Tibial artery (tissue), 4 donors: ENCODE measurements at regions of chr14 and their contacts with region 1.

Region 1: DNA sequence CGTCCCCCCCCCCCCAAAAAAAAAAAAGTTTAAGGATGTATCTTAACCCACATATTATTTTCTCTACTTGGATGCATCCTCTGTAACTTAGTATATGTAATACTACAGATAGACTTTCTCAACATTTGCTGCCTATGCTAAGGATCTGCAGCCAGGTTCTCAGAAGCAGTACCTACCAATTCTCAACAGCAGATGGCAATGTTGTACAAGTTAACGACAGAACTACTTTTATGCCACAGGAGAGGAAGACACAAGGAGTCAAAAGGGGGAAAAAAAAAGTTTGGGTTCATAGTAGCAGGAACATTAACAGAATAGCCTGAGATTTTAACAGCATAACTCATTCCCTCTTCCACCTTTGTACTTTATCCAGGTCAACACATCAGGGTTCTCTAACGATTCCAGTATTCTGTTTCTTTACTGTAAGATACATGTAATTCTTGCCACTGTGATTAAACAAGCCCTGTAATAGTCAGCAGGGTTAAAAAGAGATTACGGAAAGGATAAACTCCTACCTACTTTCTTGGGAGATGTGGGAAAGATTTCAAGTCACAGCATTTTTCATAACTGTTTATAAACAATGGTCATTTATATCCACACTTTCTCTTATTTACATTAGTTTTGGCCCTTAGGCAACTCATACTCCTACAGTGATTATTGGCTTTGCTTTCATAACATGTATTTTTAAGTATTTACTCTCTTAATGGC is 5.7 kb upstream of the NEK9 start:
- DNase-seq: peak in 1 of 2 donors; percentile 38
- H3K4me3 ChIP-seq: no peak overlapping the region
- H3K27ac ChIP-seq: no peak overlapping the region
- H3K4me1 ChIP-seq: peaks cover 0 to 13% (median 6%) of the 10 kb centered on the region in 4 donors
- H3K27me3 ChIP-seq: no peaks in the 10 kb centered on the region
- CTCF ChIP-seq: peak; percentile 65 to 94

Region 2: GRCh38 chr14:75198291-75198933 is 65.9 kb after region 1 on chr14:
- intact Hi-C with region 1: no loop called
- DNase-seq: peak in 1 of 2 donors; percentile 77
- H3K4me3 ChIP-seq: no peak overlapping the region
- H3K27ac ChIP-seq: peak overlapping the region; percentile 21 to 44
- H3K4me1 ChIP-seq: peaks cover 0 to 16% (median 12%) of the 10 kb centered on the region in 4 donors
- H3K27me3 ChIP-seq: no peaks in the 10 kb centered on the region
- CTCF ChIP-seq: no peak

Region 3: GRCh38 chr14:75301666-75302325 is 169.3 kb after region 1 on chr14:
- intact Hi-C with region 1: loop called (anchors 2 kb)
- DNase-seq: peak; percentile 60 to 77
- H3K4me3 ChIP-seq: no peak overlapping the region
- H3K27ac ChIP-seq: no peak overlapping the region
- H3K4me1 ChIP-seq: peaks cover 0 to 6% (median 0%) of the 10 kb centered on the region in 4 donors
- H3K27me3 ChIP-seq: no peaks in the 10 kb centered on the region
- CTCF ChIP-seq: no peak

Region 4: DNA sequence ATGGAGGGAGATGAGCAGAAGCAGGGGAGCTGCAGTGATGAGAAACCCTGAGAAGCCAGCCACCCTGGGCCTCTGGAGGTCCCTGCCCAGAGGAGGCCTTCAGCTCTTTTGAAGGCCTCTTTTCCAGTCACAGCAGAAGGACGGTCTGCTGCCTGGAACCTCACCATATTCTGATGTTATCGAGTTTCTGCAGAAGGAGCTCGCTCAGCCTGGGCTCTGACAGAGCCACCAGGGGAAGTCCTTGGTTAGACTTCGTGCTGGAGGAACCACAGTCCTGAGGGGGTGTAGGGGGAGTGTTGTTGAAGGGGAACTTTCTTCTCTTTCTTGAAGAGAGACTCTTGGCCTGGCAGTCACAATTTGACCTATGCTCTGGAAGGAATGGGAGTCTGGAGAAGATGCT is 364.7 kb after region 1 on chr14:
- intact Hi-C with region 1: loop called (anchors 10 kb)
- DNase-seq: no peak
- H3K4me3 ChIP-seq: no peak overlapping the region
- H3K27ac ChIP-seq: no peak overlapping the region
- H3K4me1 ChIP-seq: no peaks in the 10 kb centered on the region
- H3K27me3 ChIP-seq: no peaks in the 10 kb centered on the region
- CTCF ChIP-seq: no peak